Head of caudate nucleus (tissue), 42 donors: ENCODE measurements at regions of chr6 and their contacts with region 1.

Region 1: DNA sequence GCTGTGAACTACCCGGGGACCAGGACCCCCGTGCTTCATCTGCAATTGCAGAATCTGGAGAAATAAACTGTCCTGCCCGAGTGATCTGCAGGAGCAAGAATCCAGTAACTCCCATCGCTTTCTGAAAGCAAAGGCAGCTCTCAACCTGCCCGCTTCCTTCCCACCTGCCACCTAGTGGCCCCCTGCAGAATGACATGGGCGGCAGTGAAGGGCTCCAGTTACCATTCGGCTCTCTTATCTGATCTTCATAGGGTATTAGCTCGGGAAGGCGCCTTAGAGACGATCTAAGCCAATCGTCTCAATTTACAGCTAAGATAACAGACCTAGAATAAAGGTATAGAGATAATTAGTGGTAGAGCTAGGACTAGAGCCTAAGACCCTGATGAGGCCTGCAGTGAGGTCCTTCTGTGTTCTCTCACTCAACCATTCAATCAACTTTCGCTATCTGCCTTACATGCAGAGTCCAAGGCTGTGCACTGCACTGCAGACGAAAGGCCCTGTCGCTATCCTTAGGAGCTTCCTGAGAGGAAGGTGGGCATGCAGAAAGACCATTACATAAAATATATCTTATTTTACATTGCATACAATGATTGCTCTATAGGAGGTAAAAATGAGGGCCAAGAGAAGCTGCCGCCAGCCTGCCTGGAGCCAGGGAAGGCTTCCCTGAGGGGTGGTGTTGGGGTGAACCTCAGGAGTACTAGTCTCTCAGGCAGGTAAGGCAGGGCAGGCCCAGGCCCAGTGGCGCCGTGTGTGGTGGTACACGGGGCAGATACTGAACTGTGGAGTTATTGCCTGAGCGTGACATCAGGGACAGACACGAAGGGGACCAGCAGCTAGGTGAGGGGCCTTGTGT is 7.1 kb upstream of the PSMG4 start:
- DNase-seq: peak; percentile 60 to 95 (median 88)

Region 2: DNA sequence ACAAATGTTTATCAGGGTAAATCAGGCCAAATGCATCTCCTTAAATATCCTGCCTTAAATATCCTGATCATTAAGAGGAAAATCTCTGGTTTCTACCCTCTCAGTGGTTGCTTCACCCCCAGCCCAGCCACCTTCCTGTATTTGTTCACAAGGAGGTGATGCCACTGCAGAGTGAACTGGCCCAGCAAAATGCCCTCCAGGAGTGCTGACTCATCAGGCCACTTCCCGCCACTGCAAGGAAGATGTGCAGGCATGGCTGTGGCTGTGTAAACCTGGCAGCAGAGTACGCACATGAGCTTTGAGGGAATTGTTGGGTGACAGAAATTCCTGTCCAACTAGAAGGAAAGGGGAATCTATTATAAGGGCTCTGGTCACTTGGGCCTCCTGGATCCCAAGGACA is 238.2 kb before region 1 on chr6:
- intact Hi-C with region 1: no loop called
- DNase-seq: peak in 6 of 42 donors; percentile 28 to 55 (median 46)

Region 3: GRCh38 chr6:3125815-3126214 is 125.9 kb before region 1 on chr6:
- intact Hi-C with region 1: loop called (anchors 2 kb)
- DNase-seq: no peak

Region 4: GRCh38 chr6:3157131-3157927 is 94.4 kb before region 1 on chr6 and contains the start of gene TUBB2A:
- intact Hi-C with region 1: loop called (anchors 10 kb)
- DNase-seq: peak; percentile 55 to 96 (median 88)

Region 5: GRCh38 chr6:3284281-3284876 is 32.7 kb after region 1 on chr6:
- intact Hi-C with region 1: no loop called
- DNase-seq: peak; percentile 42 to 85 (median 70)